PC-9 (cell line): ENCODE measurements at regions of chr1 and their contacts with region 1.

Region 1: DNA sequence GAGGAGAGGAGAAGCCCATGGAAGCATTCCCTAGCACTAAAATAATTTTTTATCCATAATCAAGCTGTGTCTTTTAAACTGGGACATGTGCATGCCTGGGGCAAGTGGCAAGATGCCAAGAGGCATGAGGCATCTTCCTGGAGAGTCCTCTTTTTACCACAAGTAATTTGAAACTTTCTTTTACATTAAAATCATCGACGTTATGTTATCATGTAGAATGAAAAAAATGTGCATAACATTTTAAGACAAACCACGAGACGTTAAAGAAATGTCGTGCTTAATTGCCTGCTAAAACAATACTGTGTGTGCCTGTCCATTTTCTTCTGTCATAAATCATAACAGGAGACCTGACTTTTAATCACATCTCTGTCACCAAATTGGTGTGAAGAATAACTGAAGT is 1.5 kb downstream of the STYXL2 start:
- DNase-seq: peak; percentile 80 to 82
- H3K4me3 ChIP-seq: no peak overlapping the region
- H3K27ac ChIP-seq: no peak overlapping the region
- H3K4me1 ChIP-seq: peaks cover 24% of the 10 kb centered on the region
- H3K27me3 ChIP-seq: no peaks in the 10 kb centered on the region
- CTCF ChIP-seq: no peak

Region 2: GRCh38 chr1:167105271-167106118 is 10.1 kb after region 1 on chr1:
- CTCF ChIA-PET with region 1: no interaction called
- POLR2A ChIA-PET with region 1: no interaction called
- intact Hi-C with region 1: loop called (anchors 2 kb)
- DNase-seq: peak in 1 of 2 experiments; percentile 68
- H3K4me3 ChIP-seq: no peak overlapping the region
- H3K27ac ChIP-seq: 0 out of 2 replicates have a peak overlapping the region, but pooled peaks have one; percentile 2
- H3K4me1 ChIP-seq: peaks cover 75% of the 10 kb centered on the region
- H3K27me3 ChIP-seq: no peaks in the 10 kb centered on the region
- CTCF ChIP-seq: no peak